ENCODE measurements at regions of chr12 and their contacts with region 1.

Region 1: DNA sequence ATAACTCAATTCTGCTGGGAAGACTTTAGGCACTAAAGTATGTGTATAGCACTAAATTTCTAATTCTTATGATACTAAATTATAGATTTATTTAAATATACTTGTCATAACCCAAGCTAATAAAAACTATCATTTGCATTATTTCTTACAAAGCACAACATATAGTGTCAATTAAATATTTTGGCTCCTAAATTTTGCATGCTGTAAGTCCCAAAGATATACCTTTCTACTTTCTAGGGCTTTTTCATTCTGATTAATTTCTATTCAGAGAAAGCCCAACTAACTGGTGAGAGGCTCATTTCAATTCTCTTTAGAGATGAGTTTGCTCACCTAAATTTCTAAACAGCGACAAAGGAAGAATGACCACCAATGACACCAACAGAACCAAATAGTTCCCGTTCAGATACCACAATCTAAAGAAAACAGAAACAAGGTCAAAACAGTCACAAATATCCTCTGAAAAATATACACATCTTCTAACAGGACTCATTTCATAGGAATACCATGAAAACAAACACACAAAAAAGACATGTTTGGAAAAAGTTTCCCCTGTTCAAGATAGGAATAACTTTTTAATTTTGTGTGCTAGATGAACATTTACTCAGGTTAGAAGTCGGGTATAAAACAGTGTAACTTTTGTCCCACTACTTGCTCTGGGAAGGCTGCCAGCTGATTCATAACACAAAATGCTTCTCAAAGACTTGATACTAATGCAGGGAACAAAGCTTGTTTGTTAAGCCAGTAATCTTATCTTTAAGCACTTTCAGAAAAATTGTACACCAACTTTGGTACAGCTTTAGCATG is 7.6 kb downstream of the SLC38A2 start:
- DNase-seq: peak; percentile 62
- H3K4me3 Mint-ChIP-seq: peak overlapping the region; percentile 53
- H3K27ac Mint-ChIP-seq: peak overlapping the region; percentile 50
- H3K4me1 Mint-ChIP-seq: peaks cover 16% of the 10 kb centered on the region
- H3K27me3 Mint-ChIP-seq: no peaks in the 10 kb centered on the region
- CTCF ChIP-seq: no peak

Region 2: DNA sequence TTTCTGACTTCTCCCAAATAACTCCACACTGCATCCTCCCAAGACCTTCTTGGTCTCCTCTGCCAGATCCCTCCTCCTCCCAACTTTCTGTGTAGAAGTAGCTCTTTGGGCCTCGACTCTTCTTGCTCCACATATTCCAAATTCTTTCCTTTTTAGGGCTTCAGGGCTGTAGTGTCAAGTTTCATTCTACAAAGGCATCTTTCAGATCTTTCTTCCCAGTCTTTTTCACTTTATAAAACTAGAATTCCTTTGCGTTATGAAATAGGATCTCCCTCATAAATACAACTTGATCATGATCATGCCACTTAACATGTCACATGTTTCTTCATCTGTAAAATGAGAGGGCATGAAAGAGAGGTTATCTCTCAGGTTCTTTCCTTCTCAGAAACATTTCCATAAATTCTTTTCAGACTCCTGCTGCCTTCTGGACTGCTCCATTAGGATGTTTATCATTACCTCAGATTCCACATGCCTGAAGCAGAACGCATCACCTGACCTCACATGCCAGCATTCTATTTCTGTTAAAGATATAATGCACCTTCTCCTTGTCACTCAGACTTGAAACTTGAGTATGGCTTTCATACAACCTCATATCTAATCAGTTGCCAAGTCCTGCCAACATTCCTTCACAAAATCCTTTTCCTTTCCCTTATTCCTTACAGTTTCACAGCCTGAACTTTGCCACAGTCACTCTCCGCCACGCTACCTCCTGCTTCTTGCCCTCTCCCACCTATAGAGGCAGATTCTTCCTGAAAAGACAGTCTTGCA is 104.6 kb before region 1 on chr12:
- CTCF ChIA-PET with region 1: no interaction called
- intact Hi-C with region 1: no loop called
- DNase-seq: no peak
- H3K4me3 Mint-ChIP-seq: no peak overlapping the region
- H3K27ac Mint-ChIP-seq: no peak overlapping the region
- H3K4me1 Mint-ChIP-seq: peaks cover 25% of the 10 kb centered on the region
- H3K27me3 Mint-ChIP-seq: no peaks in the 10 kb centered on the region
- CTCF ChIP-seq: no peak

Region 3: DNA sequence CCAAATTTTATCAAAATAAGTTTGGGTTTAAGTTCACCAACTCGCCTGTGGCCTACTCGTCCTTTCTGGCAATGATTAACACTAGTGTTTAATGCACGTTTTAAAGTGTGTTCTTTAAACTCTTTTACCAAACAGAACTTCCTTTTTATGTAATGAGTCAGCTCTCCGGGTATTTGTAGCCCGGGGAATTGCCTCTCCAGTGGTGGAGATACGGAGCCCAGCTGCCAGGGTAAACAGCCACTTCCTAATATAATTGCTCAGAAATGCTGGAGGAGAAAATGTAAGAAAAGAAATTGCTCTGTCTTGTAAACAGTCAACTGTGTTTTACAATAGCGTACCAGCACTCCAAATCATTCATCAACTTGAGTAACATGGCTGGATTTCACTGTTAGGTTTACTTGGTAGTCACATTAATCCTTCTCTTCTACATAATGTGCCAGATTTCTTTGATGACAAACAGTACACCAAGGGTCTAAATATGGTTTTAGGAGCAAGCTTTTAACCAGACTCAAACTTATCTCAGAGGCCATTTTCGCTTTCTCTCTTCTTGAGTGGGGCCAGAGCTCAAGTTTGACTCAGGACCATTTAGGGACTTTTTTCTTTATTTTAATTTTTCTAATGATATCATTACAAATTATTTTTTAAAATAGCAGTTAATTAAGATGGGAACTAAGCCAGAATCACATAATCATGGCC is 108.8 kb after region 1 on chr12:
- CTCF ChIA-PET with region 1: no interaction called
- intact Hi-C with region 1: loop called (anchors 5 kb)
- DNase-seq: peak; percentile 56
- H3K4me3 Mint-ChIP-seq: peak overlapping the region; percentile 36
- H3K27ac Mint-ChIP-seq: peak overlapping the region; percentile 64
- H3K4me1 Mint-ChIP-seq: peaks cover 49% of the 10 kb centered on the region
- H3K27me3 Mint-ChIP-seq: no peaks in the 10 kb centered on the region
- CTCF ChIP-seq: no peak